ENCODE measurements at regions of chr12 and their contacts with region 1.

Region 1: GRCh38 chr12:8796831-8797626 is 25.4 kb upstream of the A2ML1 start:
- DNase-seq: peak in 1 of 2 experiments; percentile 50
- H3K4me3 ChIP-seq: no peak overlapping the region
- H3K27ac ChIP-seq: no peak overlapping the region
- H3K4me1 ChIP-seq: peaks cover 0 to 5% (median 0%) of the 10 kb centered on the region in 4 experiments; a peak in 1 of 7 replicates
- H3K27me3 ChIP-seq: no peaks in the 10 kb centered on the region
- CTCF ChIP-seq: no peak
- EP300 ChIP-seq: no peak
- POLR2A ChIP-seq: peak in 1 of 2 experiments; percentile 57
- RAD21 ChIP-seq: no peak

Region 2: GRCh38 chr12:8746046-8746445 is 51.0 kb before region 1 on chr12:
- CTCF ChIA-PET with region 1: no interaction called
- POLR2A ChIA-PET with region 1: no interaction called
- DNase-seq: no peak
- H3K4me3 ChIP-seq: no peak overlapping the region
- H3K27ac ChIP-seq: no peak overlapping the region
- H3K4me1 ChIP-seq: no peaks in the 10 kb centered on the region
- H3K27me3 ChIP-seq: no peaks in the 10 kb centered on the region
- CTCF ChIP-seq: no peak
- EP300 ChIP-seq: no peak
- POLR2A ChIP-seq: no peak
- RAD21 ChIP-seq: no peak

Region 3: GRCh38 chr12:8780389-8780788 is 16.6 kb before region 1 on chr12:
- CTCF ChIA-PET with region 1: interaction called, 3 read pairs
- POLR2A ChIA-PET with region 1: interaction called, 21 read pairs
- DNase-seq: no peak
- H3K4me3 ChIP-seq: no peak overlapping the region
- H3K27ac ChIP-seq: no peak overlapping the region
- H3K4me1 ChIP-seq: no peaks in the 10 kb centered on the region
- H3K27me3 ChIP-seq: no peaks in the 10 kb centered on the region
- CTCF ChIP-seq: peak in 2 of 3 experiments; percentile 44 to 58; a peak in 2 of 4 replicates
- EP300 ChIP-seq: no peak
- POLR2A ChIP-seq: no peak
- RAD21 ChIP-seq: peak; percentile 61 to 68

Region 4: GRCh38 chr12:8817856-8818255 is 20.8 kb after region 1 on chr12:
- CTCF ChIA-PET with region 1: interaction called, 6 read pairs
- POLR2A ChIA-PET with region 1: interaction called, 211 read pairs
- DNase-seq: no peak
- H3K4me3 ChIP-seq: no peak overlapping the region
- H3K27ac ChIP-seq: no peak overlapping the region
- H3K4me1 ChIP-seq: peaks cover 3 to 21% (median 19%) of the 10 kb centered on the region in 4 experiments
- H3K27me3 ChIP-seq: no peaks in the 10 kb centered on the region
- CTCF ChIP-seq: no peak
- EP300 ChIP-seq: no peak
- POLR2A ChIP-seq: no peak
- RAD21 ChIP-seq: no peak

Region 5: DNA sequence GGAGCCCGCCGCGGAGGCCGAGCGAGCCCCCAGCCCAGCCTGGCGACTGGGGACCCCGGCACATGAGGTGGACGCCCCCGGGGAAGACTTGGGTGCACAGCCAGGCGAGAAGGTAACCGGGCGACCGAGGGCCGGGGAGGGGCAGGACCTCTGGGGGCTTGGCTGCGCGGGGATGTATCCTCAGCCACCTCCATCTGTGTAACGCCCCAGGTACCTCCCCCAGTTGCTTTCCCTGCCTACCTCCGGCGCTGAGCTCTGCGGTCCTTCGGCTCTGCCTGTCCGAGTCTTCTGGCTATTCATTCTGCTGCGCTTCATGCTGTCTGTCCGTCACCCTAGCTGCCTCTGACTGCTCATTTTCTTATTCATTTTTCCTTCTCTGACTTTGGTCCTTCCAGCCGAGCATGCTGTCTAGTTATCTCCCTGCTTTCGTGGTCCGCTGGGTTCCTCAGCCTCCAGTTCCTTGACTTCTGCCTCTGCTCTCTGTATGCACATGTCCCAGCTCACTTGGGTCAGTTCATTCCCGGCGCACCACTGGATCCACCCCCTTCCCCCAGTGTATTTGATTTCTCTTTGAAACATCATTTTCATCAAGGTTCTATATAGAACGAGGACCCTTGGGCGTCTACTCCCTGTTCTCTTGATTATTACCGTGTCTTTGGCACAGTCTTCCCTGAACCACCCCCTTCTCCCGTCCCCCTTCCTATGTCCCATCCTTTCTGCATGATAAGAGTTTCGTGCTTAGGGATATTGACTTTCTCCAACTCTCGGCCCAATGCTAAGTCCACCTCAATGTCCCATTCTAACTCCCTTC is 117.9 kb after region 1 on chr12:
- CTCF ChIA-PET with region 1: no interaction called
- POLR2A ChIA-PET with region 1: interaction called, 15 read pairs
- DNase-seq: peak in 1 of 2 experiments; percentile 76
- H3K4me3 ChIP-seq: peak overlapping the region; percentile 91 to 99 (median 98)
- H3K27ac ChIP-seq: peak overlapping the region; percentile 65; the same call in 1 of the 2 replicates
- H3K4me1 ChIP-seq: peaks cover 0 to 33% (median 11%) of the 10 kb centered on the region in 4 experiments; a peak in 5 of 7 replicates
- H3K27me3 ChIP-seq: no peaks in the 10 kb centered on the region
- CTCF ChIP-seq: no peak
- EP300 ChIP-seq: no peak
- POLR2A ChIP-seq: 0 out of 3 replicates have a peak, but pooled peaks of 1 of the 2 experiments have one; percentile 42
- RAD21 ChIP-seq: no peak

Measured in H1 (cell line).